Activated CD4-positive, alpha-beta T cell treated with anti-CD3 and anti-CD28 coated beads, Interleukin-2, amount 10 ng/mL, durations not matched to agents 24 days and 14 days (primary cell): ENCODE measurements at regions of chr15 and their contacts with region 1.

Region 1: DNA sequence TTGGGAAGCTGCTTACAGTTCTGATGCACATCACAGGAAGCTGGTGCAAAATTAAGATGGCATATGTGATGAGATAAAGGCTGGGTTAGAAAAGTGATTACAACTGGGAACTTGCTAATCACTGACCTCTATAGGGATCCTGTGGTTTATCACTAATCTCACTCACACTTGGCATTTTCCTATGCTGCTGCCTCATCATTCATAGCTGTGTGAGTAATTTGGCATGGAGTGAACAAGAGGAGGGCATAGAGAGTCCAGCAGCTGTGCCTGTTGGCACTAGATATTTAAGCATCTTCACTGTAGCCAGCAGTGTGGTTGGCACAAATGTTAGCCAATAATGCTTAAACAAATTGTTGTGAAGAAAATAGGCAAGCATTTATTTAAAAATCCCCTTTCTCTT is 217.7 kb upstream of the CGNL1 start:
- DNase-seq: no peak
- H3K4me3 Mint-ChIP-seq: no peak overlapping the region
- H3K27ac Mint-ChIP-seq: no peak overlapping the region
- H3K4me1 Mint-ChIP-seq: peaks cover 9% of the 10 kb centered on the region
- H3K27me3 Mint-ChIP-seq: no peaks in the 10 kb centered on the region

Region 2: GRCh38 chr15:56608140-56608778 is 550.3 kb before region 1 on chr15:
- intact Hi-C with region 1: no loop called
- DNase-seq: no peak
- H3K4me3 Mint-ChIP-seq: no peak overlapping the region
- H3K27ac Mint-ChIP-seq: no peak overlapping the region
- H3K4me1 Mint-ChIP-seq: peaks cover 11% of the 10 kb centered on the region
- H3K27me3 Mint-ChIP-seq: peaks cover 18% of the 10 kb centered on the region

Region 3: DNA sequence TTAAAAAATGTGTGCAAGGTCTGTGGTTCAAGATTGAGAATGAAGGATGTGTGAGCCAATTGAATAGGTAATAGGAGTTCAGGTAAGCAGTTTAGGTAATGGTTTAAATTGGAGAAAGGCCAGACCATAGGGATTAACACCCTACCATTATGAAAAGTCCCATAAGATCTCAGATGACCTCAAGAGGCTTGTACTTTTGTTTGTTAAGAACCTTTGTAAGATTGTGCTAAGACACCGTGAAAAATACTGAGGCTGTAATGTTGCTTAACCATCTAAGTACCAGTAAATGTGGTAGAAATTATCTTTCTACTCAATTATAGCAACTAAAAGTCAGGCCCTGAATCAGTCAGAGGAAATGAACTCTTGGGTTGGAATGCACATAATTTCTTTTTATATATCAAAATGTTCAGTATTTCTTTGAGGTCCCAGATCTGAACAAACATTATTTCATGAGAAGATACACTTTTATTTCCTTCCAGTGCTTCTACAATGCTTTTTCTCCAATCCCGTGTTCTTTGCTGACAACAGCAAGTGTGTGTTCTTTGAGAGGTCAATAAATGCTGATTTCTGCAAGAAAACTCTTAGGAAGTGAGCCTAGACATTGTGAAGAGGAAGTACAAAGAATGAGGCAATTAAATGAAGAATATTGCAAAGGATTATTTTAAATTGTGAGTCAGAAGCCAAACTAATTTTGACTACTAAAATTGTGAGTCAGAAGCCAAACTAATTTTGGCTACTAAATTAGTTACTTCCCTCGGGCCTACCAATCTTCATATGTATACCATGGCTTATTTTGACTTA is 173.7 kb before region 1 on chr15:
- intact Hi-C with region 1: loop called (anchors 10 kb)
- DNase-seq: no peak
- H3K4me3 Mint-ChIP-seq: no peak overlapping the region
- H3K27ac Mint-ChIP-seq: no peak overlapping the region
- H3K4me1 Mint-ChIP-seq: peaks cover 24% of the 10 kb centered on the region
- H3K27me3 Mint-ChIP-seq: no peaks in the 10 kb centered on the region

Region 4: DNA sequence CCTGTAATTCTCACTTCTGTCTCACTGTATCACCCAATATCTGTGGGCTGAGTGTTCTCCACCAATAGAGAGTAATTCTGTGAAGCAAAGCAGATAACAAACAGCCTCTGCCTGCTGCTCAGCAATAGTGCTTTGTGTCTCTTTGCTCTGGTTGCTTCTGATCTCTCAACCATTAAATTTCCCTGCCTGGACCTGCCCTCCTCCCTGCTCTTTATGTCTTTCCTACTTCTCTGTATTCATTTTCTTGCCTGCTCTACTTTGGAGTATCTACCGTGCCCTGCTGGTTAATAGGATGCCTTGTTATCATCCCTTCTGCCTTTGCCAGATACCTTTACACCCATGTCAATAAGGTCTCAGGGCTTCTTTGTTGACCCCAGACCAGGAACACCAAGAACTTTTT is 114.8 kb after region 1 on chr15:
- intact Hi-C with region 1: no loop called
- DNase-seq: no peak
- H3K4me3 Mint-ChIP-seq: no peak overlapping the region
- H3K27ac Mint-ChIP-seq: no peak overlapping the region
- H3K4me1 Mint-ChIP-seq: no peaks in the 10 kb centered on the region
- H3K27me3 Mint-ChIP-seq: no peaks in the 10 kb centered on the region

Region 5: GRCh38 chr15:57604507-57604906 is 445.9 kb after region 1 on chr15:
- intact Hi-C with region 1: no loop called
- DNase-seq: no peak
- H3K4me3 Mint-ChIP-seq: no peak overlapping the region
- H3K27ac Mint-ChIP-seq: no peak overlapping the region
- H3K4me1 Mint-ChIP-seq: no peaks in the 10 kb centered on the region
- H3K27me3 Mint-ChIP-seq: peaks cover 7% of the 10 kb centered on the region